ENCODE measurements at regions of chr4 and their contacts with region 1.

Region 1: DNA sequence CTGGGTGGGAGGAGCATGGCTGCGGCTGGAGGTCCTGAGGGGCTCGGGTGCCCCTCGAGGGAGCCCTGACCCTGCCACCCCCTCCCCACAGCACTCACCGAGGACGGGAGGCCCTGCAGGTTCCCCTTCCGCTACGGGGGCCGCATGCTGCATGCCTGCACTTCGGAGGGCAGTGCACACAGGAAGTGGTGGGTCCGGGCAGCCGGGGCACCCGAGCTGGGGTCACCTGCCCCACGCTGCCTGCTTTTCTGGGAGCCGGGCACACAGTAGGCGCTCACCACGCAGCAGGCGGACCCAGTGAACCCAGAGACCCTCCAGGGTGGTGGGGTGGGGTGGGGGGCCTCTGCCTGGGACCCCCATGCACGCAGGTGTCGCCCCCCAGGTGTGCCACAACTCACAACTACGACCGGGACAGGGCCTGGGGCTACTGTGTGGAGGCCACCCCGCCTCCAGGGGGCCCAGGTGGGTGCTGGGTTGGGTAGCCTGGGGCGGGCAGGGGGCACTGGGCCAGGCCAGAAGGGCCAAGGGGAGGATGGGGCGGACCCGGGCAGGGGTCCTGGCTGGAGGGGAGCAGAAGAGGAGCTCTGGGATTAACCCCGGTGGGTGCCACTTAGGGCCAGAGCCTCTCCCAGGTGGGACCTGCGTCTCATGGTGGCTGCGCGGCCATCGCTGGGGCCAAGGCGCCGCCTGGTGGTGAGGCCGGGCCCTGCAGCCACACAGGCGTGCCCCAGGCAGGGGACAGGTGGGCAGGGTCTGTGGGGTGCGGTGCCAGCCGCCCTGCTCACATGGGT is 1.4 kb downstream of the HGFAC start:
- DNase-seq: peak; percentile 39
- ATAC-seq: peak; percentile 57
- H3K4me3 ChIP-seq: peak overlapping the region; percentile 52 to 71 (median 61); a peak in 5 of 6 replicates
- H3K27ac ChIP-seq: peak overlapping the region; percentile 89
- H3K4me1 ChIP-seq: peaks cover 39% of the 10 kb centered on the region
- H3K27me3 ChIP-seq: no peaks in the 10 kb centered on the region
- CTCF ChIP-seq: peak; percentile 99
- EP300 ChIP-seq: no peak
- POLR2A ChIP-seq: no peak
- RAD21 ChIP-seq: peak; percentile 98

Region 2: DNA sequence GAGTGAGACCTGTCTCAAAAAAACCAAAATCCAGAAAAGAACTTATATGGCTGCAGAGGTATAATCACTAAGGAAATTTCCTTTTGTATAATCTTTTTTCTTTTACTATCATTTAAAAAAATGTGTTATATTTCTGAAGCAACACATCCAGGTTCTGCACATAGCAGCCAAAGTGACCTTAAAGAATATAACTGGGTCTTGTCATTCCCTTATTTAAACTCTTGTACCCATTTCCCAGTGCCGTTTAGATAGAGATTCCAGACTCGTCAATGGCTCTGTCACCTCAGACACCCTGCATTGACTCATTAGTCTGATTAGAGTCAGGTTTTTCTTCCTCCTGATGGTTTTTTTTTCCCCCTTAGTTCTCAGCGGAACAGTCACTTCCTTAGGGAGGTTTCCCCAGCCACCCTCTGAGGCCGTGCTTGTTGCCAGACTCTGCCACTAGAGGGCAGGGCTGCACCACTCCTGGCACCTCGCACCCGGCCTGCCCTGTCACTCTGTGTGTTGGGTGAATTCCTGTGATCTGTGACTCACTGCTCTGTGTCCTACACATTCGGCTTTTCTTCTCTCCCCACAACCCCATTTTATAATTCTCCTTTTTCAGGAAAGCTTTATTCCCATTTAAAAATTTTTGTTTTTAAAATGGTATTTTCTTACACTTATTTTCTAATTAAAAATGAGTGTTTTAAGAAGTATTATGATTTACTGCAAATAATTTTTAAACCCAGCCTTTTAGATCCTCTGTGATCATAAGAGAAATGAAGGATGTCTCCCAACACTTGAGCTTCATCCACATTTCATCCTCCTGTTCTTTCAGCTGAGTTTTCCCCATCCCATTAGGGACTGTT is 336.6 kb before region 1 on chr4:
- CTCF ChIA-PET with region 1: no interaction called
- POLR2A ChIA-PET with region 1: no interaction called
- in situ Hi-C with region 1: no loop called
- intact Hi-C with region 1: loop called (anchors 5 kb)
- DNase-seq: peak; percentile 67
- ATAC-seq: peak; percentile 100
- H3K4me3 ChIP-seq: no peak overlapping the region
- H3K27ac ChIP-seq: no peak overlapping the region
- H3K4me1 ChIP-seq: no peaks in the 10 kb centered on the region
- H3K27me3 ChIP-seq: no peaks in the 10 kb centered on the region
- CTCF ChIP-seq: peak; percentile 96
- EP300 ChIP-seq: no peak
- POLR2A ChIP-seq: no peak
- RAD21 ChIP-seq: peak; percentile 81

Region 3: GRCh38 chr4:3292571-3293400 is 150.4 kb before region 1 on chr4 and contains the start of gene RGS12:
- CTCF ChIA-PET with region 1: no interaction called
- POLR2A ChIA-PET with region 1: no interaction called
- in situ Hi-C with region 1: no loop called
- intact Hi-C with region 1: loop called (anchors 5 kb)
- DNase-seq: peak; percentile 88
- ATAC-seq: peak; percentile 87
- H3K4me3 ChIP-seq: peak within 1 kb of the TSS; percentile 88 to 98 (median 96)
- H3K27ac ChIP-seq: peak within 1 kb of the TSS; percentile 83
- H3K4me1 ChIP-seq: peaks cover 56% of the 10 kb centered on the region
- H3K27me3 ChIP-seq: no peaks in the 10 kb centered on the region
- CTCF ChIP-seq: no peak; the same call in 1 of the 2 replicates
- EP300 ChIP-seq: no peak
- POLR2A ChIP-seq: peak in 1 of 2 experiments; percentile 72; a peak in 2 of 4 replicates
- RAD21 ChIP-seq: 0 out of 2 replicates have a peak, but pooled peaks have one; percentile 50
- total RNA-seq, gene RGS12: 18.2 and 21.0 TPM in 2 replicates

Region 4: GRCh38 chr4:3346146-3346545 is 97.0 kb before region 1 on chr4:
- CTCF ChIA-PET with region 1: interaction called, 54 read pairs
- POLR2A ChIA-PET with region 1: interaction called, 6 read pairs
- in situ Hi-C with region 1: loop called (anchors 5 kb)
- intact Hi-C with region 1: loop called (anchors 1 kb)
- DNase-seq: peak; percentile 81
- ATAC-seq: peak; percentile 93
- H3K4me3 ChIP-seq: no peak overlapping the region
- H3K27ac ChIP-seq: no peak overlapping the region
- H3K4me1 ChIP-seq: peaks cover 25% of the 10 kb centered on the region
- H3K27me3 ChIP-seq: no peaks in the 10 kb centered on the region
- CTCF ChIP-seq: peak; percentile 83
- EP300 ChIP-seq: no peak
- POLR2A ChIP-seq: no peak
- RAD21 ChIP-seq: peak; percentile 89

Region 5: GRCh38 chr4:3355266-3355748 is 87.8 kb before region 1 on chr4:
- CTCF ChIA-PET with region 1: no interaction called
- POLR2A ChIA-PET with region 1: interaction called, 22 read pairs
- in situ Hi-C with region 1: no loop called
- intact Hi-C with region 1: loop called (anchors 2 kb)
- DNase-seq: no peak
- ATAC-seq: no peak
- H3K4me3 ChIP-seq: peak overlapping the region in 1 of 3 experiments; percentile 49; a peak in 1 of 6 replicates
- H3K27ac ChIP-seq: peak overlapping the region; percentile 92
- H3K4me1 ChIP-seq: peaks cover 56% of the 10 kb centered on the region
- H3K27me3 ChIP-seq: no peaks in the 10 kb centered on the region
- CTCF ChIP-seq: no peak
- EP300 ChIP-seq: no peak
- POLR2A ChIP-seq: no peak
- RAD21 ChIP-seq: no peak

Region 6: GRCh38 chr4:3408793-3409330 is 34.3 kb before region 1 on chr4:
- CTCF ChIA-PET with region 1: no interaction called
- POLR2A ChIA-PET with region 1: interaction called, 17 read pairs
- in situ Hi-C with region 1: no loop called
- intact Hi-C with region 1: loop called (anchors 5 kb)
- DNase-seq: no peak
- ATAC-seq: peak; percentile 26
- H3K4me3 ChIP-seq: no peak overlapping the region
- H3K27ac ChIP-seq: peak overlapping the region; percentile 96
- H3K4me1 ChIP-seq: peaks cover 50% of the 10 kb centered on the region
- H3K27me3 ChIP-seq: no peaks in the 10 kb centered on the region
- CTCF ChIP-seq: no peak
- EP300 ChIP-seq: no peak
- POLR2A ChIP-seq: no peak
- RAD21 ChIP-seq: no peak

Region 7: DNA sequence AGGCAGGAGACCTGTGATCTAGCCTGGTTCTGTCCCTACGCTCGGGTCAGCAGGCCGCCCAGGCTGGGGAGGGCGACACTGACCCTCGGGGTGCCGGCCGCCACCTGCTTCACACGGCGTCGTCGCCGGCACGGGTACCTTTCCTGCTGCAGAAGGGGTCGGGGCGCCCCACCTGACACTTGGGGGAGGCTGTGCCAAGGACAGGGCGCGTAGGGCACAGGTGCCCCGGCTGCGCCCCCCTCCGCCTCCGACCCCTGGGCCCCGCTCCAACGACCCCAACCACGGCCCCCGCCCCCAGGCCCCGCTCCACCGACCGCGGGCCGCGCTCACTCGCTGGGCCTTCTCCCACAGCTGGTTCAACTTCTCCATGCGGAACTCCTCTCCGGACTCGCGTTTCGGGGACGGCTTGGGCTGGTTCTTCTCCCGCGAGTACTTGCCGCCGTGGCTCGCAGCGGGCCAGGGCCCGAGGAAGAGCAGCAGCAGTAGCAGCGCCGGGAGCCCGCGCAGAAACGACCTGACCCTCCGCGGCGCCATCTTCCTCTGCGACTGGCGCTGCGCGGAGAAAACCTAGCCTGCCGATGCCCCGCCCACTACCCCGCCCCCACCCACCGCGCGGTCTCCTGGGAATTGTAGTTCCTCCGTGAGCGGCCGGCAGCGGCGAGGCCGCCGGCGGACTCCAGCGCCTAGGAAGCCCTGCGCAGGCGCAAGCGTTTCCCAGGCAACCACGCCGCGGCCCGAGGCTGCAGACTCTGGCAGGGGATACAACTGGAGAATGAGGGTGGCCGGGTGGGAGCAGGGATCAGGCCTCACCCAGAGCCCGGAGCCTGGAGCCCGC is 88.9 kb after region 1 on chr4 and contains the start of gene LRPAP1:
- CTCF ChIA-PET with region 1: no interaction called
- POLR2A ChIA-PET with region 1: no interaction called
- in situ Hi-C with region 1: no loop called
- intact Hi-C with region 1: no loop called
- DNase-seq: peak; percentile 80
- ATAC-seq: peak; percentile 93
- H3K4me3 ChIP-seq: peak within 1 kb of the TSS; percentile 90 to 99 (median 98)
- H3K27ac ChIP-seq: peak within 1 kb of the TSS; percentile 63
- H3K4me1 ChIP-seq: peaks cover 28% of the 10 kb centered on the region
- H3K27me3 ChIP-seq: peaks cover 0 to 7% of the 10 kb centered on the region in 2 experiments; a peak in 2 of 5 replicates
- CTCF ChIP-seq: peak; percentile 25
- EP300 ChIP-seq: no peak
- POLR2A ChIP-seq: peak in 1 of 2 experiments; percentile 97; a peak in 2 of 4 replicates
- RAD21 ChIP-seq: no peak
- total RNA-seq, gene LRPAP1: 81.5 and 191 TPM in 2 replicates